ENCODE measurements at regions of chr4 and their contacts with region 1.

Region 1: DNA sequence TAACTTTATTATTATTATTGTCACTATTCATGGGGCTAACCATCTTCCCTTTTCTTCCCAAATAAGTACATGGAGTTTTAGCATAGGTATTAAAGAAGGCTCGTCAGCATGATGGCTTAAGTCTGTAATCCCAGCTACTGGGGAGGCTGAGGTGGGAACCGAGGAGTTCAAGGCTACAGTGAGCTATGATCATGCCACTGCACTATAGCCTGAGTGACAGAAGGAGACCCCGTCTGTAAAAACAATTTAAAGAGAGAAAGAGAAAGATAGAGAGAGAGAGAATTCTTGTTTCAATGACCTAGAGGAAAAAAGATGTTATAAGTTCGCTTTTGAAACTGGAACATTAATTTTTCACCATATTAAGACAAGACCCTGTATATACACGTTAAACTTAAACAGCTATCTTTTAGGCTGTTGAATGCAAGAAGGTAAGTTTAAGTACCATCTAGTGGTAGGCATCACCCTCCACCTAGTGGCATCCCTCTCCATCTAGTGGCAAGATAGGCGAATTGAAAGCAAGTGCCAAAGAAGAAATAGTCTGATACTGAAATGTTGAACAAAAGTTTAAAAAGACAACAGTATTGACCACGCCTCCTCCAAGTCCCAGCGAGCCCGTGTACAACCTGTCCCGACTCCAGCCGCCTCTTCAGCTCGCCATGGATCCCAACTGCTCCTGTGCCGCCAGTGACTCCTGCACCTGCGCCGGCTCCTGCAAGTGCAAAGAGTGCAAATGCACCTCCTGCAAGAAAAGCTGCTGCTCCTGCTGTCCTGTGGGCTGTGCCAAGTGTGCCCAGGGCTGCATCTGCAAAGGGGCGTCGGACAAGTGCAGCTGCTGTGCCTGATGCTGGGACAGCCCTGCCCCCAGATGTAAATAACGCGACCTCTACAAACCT is 26.0 kb upstream of the YTHDC1 start:
- DNase-seq: peak; percentile 64 to 68 (median 65)
- H3K4me3 ChIP-seq: peak overlapping the region in 1 of 2 donors; percentile 44
- H3K4me3 Mint-ChIP-seq: peak overlapping the region; percentile 66 to 96 (median 82)
- H3K27ac ChIP-seq: no peak overlapping the region
- H3K27ac Mint-ChIP-seq: peak overlapping the region in 5 of 7 donors; percentile 4 to 42 (median 5)
- H3K4me1 ChIP-seq: peaks cover 7% of the 10 kb centered on the region
- H3K4me1 Mint-ChIP-seq: peaks cover 13 to 16% (median 15%) of the 10 kb centered on the region in 4 donors
- H3K27me3 ChIP-seq: no peaks in the 10 kb centered on the region
- H3K27me3 Mint-ChIP-seq: peaks cover 0 to 3% of the 10 kb centered on the region in 2 donors

Region 2: GRCh38 chr4:67080158-67080557 is 1295.8 kb before region 1 on chr4:
- CTCF ChIA-PET with region 1: no interaction called
- POLR2A ChIA-PET with region 1: no interaction called
- intact Hi-C with region 1: no loop called
- DNase-seq: no peak
- H3K4me3 ChIP-seq: no peak overlapping the region
- H3K4me3 Mint-ChIP-seq: no peak overlapping the region
- H3K27ac ChIP-seq: no peak overlapping the region
- H3K27ac Mint-ChIP-seq: no peak overlapping the region
- H3K4me1 ChIP-seq: no peaks in the 10 kb centered on the region
- H3K4me1 Mint-ChIP-seq: no peaks in the 10 kb centered on the region
- H3K27me3 ChIP-seq: no peaks in the 10 kb centered on the region
- H3K27me3 Mint-ChIP-seq: no peaks in the 10 kb centered on the region

Region 3: GRCh38 chr4:68299492-68300457 is 76.1 kb before region 1 on chr4:
- CTCF ChIA-PET with region 1: no interaction called
- POLR2A ChIA-PET with region 1: no interaction called
- intact Hi-C with region 1: no loop called
- DNase-seq: no peak
- H3K4me3 ChIP-seq: no peak overlapping the region
- H3K4me3 Mint-ChIP-seq: no peak overlapping the region
- H3K27ac ChIP-seq: no peak overlapping the region
- H3K27ac Mint-ChIP-seq: no peak overlapping the region
- H3K4me1 ChIP-seq: no peaks in the 10 kb centered on the region
- H3K4me1 Mint-ChIP-seq: no peaks in the 10 kb centered on the region
- H3K27me3 ChIP-seq: no peaks in the 10 kb centered on the region
- H3K27me3 Mint-ChIP-seq: peaks cover 5 to 9% of the 10 kb centered on the region in 2 donors

Region 4: DNA sequence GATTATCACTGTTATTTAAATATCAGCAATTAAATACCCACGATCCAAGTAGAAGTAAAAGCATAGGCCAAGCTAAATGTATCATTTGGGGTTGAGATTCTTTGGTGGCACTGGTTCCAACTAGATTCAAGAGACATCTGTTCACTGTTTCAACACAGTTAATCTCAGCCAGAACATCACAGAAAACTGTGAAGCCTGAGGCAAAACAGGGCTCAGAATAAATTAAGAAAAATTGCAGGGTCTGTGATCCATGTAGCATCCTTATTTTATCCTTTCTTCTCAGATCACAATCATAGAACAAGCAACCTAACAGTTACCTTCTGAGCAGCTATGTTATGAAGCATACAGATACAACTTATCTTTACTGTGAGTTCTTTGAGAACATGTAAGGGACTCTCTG is 49.8 kb before region 1 on chr4:
- CTCF ChIA-PET with region 1: interaction called, 16 read pairs
- POLR2A ChIA-PET with region 1: no interaction called
- intact Hi-C with region 1: no loop called
- DNase-seq: no peak
- H3K4me3 ChIP-seq: no peak overlapping the region
- H3K4me3 Mint-ChIP-seq: no peak overlapping the region
- H3K27ac ChIP-seq: no peak overlapping the region
- H3K27ac Mint-ChIP-seq: peak overlapping the region in 2 of 7 donors; percentile 6 to 17
- H3K4me1 ChIP-seq: no peaks in the 10 kb centered on the region
- H3K4me1 Mint-ChIP-seq: peaks cover 3 to 10% (median 6%) of the 10 kb centered on the region in 4 donors
- H3K27me3 ChIP-seq: no peaks in the 10 kb centered on the region
- H3K27me3 Mint-ChIP-seq: no peaks in the 10 kb centered on the region

Region 5: GRCh38 chr4:68344049-68344448 is 31.9 kb before region 1 on chr4:
- CTCF ChIA-PET with region 1: interaction called, 23 read pairs
- POLR2A ChIA-PET with region 1: interaction called, 3 read pairs
- intact Hi-C with region 1: loop called (anchors 5 kb)
- DNase-seq: no peak
- H3K4me3 ChIP-seq: no peak overlapping the region
- H3K4me3 Mint-ChIP-seq: peak overlapping the region in 6 of 8 donors; percentile 42 to 67 (median 55)
- H3K27ac ChIP-seq: no peak overlapping the region
- H3K27ac Mint-ChIP-seq: peak overlapping the region in 4 of 7 donors; percentile 18 to 86 (median 50)
- H3K4me1 ChIP-seq: peaks cover 95% of the 10 kb centered on the region
- H3K4me1 Mint-ChIP-seq: peaks cover 60 to 92% (median 73%) of the 10 kb centered on the region in 4 donors
- H3K27me3 ChIP-seq: no peaks in the 10 kb centered on the region
- H3K27me3 Mint-ChIP-seq: no peaks in the 10 kb centered on the region

Region 6: DNA sequence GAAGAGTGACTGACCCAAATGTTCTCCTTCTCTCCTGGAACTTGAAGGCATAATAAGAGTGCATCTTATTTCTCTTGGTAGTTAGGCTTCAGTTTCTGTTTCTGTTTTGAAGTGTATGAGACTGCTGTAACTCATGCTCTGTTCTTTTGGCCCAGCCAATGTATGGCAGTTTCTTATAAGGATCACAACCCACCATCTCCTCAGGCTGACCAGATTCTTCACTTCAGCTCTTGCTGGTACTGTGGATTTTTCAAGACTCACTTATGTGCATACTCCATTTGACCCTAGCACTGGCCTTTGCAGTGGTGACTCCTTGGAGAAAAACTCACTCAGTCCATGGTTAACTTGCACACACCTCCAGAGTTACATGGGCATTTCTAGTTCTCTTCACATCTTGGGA is 16.4 kb before region 1 on chr4:
- CTCF ChIA-PET with region 1: interaction called, 14 read pairs
- POLR2A ChIA-PET with region 1: no interaction called
- intact Hi-C with region 1: no loop called
- DNase-seq: no peak
- H3K4me3 ChIP-seq: no peak overlapping the region
- H3K4me3 Mint-ChIP-seq: peak overlapping the region in 4 of 8 donors; percentile 4 to 51 (median 28)
- H3K27ac ChIP-seq: no peak overlapping the region
- H3K27ac Mint-ChIP-seq: peak overlapping the region in 5 of 7 donors; percentile 8 to 79 (median 38)
- H3K4me1 ChIP-seq: no peaks in the 10 kb centered on the region
- H3K4me1 Mint-ChIP-seq: peaks cover 3 to 10% (median 5%) of the 10 kb centered on the region in 4 donors
- H3K27me3 ChIP-seq: no peaks in the 10 kb centered on the region
- H3K27me3 Mint-ChIP-seq: peaks cover 2 to 4% of the 10 kb centered on the region in 2 donors

Region 7: DNA sequence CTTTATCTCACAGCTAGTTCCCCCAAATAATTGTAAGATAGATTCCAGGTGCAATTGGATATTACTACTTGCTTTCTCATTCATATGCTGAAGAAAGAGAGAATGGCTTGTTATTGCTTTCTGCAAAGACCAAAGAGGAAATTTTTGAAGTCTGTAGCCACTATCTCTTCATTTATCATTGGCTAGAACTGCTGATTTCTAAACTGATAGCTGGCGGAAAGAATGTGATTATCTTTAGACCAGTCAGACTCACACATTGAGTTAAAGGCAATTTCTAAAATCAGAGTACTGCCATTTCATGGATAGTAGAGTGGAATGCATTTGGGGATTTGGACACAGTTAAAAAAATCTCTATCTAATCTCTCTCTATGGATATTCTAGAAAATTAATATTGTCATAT is 58.9 kb after region 1 on chr4:
- CTCF ChIA-PET with region 1: interaction called, 4 read pairs
- POLR2A ChIA-PET with region 1: no interaction called
- intact Hi-C with region 1: loop called (anchors 5 kb)
- DNase-seq: no peak
- H3K4me3 ChIP-seq: no peak overlapping the region
- H3K4me3 Mint-ChIP-seq: peak overlapping the region in 3 of 8 donors; percentile 20 to 76 (median 61)
- H3K27ac ChIP-seq: no peak overlapping the region
- H3K27ac Mint-ChIP-seq: no peak overlapping the region
- H3K4me1 ChIP-seq: peaks cover 39% of the 10 kb centered on the region
- H3K4me1 Mint-ChIP-seq: peaks cover 28 to 60% (median 45%) of the 10 kb centered on the region in 4 donors
- H3K27me3 ChIP-seq: no peaks in the 10 kb centered on the region
- H3K27me3 Mint-ChIP-seq: no peaks in the 10 kb centered on the region

Region 8: DNA sequence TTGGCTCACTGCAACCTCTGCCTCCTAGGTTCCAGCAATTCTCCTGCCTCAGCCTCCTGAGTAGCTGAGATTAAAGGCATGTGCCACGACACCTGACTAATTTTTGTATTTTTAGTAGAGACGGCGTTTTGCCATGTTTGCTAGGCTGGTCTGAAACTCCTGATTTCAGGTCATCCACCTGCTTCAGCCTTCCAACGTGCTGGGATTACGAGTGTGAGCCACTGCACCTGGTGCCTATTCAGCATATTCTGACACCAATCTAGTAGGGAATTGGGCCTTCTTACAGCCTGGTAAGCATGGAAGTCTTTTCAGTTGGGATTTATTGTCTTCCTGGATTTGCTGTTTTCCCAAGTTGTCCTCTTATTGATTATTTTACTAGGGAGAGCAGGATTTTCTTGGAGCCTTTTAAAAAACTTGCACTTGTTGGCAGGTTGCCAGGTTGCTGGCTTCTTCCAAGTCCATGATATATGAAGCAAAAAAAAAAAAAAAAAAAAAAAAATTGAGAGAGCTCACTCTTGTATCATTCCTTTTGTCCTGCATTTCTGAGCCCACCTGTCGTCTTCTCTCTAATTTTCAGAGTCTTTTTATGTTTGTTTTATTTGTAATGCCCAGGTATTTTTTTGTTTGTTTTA is 115.0 kb after region 1 on chr4:
- CTCF ChIA-PET with region 1: no interaction called
- POLR2A ChIA-PET with region 1: no interaction called
- intact Hi-C with region 1: no loop called
- DNase-seq: no peak
- H3K4me3 ChIP-seq: no peak overlapping the region
- H3K4me3 Mint-ChIP-seq: no peak overlapping the region
- H3K27ac ChIP-seq: no peak overlapping the region
- H3K27ac Mint-ChIP-seq: no peak overlapping the region
- H3K4me1 ChIP-seq: no peaks in the 10 kb centered on the region
- H3K4me1 Mint-ChIP-seq: peaks cover 2 to 9% (median 4%) of the 10 kb centered on the region in 4 donors
- H3K27me3 ChIP-seq: no peaks in the 10 kb centered on the region
- H3K27me3 Mint-ChIP-seq: peaks cover 2% of the 10 kb centered on the region in 2 donors

Region 9: DNA sequence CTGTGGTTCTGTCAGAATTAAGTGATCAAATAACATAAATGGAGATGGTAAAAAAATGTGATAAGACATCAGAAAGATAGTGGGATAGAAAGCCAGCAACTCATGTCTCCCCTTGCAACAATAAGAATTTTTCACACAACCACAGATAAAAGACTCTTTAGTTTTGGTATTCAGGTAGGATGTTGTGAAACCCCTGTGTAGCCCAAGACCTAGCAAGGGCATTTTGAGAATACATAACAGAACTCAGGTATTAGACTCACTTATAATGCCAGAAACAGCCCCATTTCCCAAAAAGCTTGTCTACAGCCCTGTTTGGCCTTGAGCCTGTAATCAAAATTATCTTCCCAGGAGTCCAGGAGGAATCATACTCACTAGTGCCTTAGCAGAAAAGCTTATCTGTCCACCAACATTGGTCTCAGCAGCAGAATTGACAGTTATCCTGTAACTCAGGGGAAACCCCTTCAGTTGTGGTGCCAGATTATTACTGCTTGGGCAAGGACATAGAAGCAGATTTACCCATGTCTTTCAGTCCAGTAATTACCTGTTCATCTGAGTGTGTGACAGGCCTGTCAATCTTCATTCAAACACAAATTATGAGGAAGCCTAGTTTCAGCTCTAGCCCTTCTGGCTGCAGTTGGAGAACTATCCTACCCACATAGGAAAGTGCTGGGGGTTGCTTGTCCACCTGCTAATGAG is 241.2 kb after region 1 on chr4:
- CTCF ChIA-PET with region 1: no interaction called
- POLR2A ChIA-PET with region 1: no interaction called
- intact Hi-C with region 1: no loop called
- DNase-seq: no peak
- H3K4me3 ChIP-seq: no peak overlapping the region
- H3K4me3 Mint-ChIP-seq: no peak overlapping the region
- H3K27ac ChIP-seq: no peak overlapping the region
- H3K27ac Mint-ChIP-seq: no peak overlapping the region
- H3K4me1 ChIP-seq: no peaks in the 10 kb centered on the region
- H3K4me1 Mint-ChIP-seq: peaks cover 0 to 7% (median 0%) of the 10 kb centered on the region in 4 donors
- H3K27me3 ChIP-seq: no peaks in the 10 kb centered on the region
- H3K27me3 Mint-ChIP-seq: peaks cover 1 to 4% of the 10 kb centered on the region in 2 donors